Endothelial cell of umbilical vein (primary cell): ENCODE measurements at regions of chr9 and their contacts with region 1.

Region 1: DNA sequence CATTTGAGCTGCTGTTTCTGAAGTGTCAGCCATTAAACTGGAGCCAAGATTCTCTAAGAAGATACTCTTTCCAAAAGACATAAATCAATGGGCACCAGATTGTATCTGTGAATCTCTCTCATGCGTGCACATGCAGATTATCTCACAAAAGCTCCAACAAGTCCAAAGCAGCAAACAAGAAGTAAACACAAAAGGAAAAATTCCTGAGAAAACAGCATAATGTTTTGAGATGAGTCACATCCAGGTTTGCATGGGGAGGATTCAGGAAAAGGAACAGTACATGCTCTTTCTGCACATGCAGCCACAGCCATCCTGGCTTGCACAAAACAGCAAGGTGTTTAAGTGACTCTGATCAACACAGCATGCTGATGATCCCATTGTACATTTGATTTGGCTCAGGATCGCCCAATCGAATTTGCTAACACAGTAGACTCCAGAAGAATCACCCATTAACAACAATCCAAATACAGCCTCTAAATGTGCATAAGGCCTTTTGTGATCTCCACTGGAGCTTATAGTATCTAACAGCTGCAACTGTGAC is 143.1 kb downstream of the ELAVL2 start:
- DNase-seq: peak; percentile 68
- H3K4me3 ChIP-seq: peak overlapping the region in 1 of 3 experiments; percentile 16
- H3K27ac ChIP-seq: peak overlapping the region; percentile 70
- H3K4me1 ChIP-seq: peaks cover 21% of the 10 kb centered on the region
- H3K27me3 ChIP-seq: no peaks in the 10 kb centered on the region
- CTCF ChIP-seq: no peak
- POLR2A ChIP-seq: no peak

Region 2: DNA sequence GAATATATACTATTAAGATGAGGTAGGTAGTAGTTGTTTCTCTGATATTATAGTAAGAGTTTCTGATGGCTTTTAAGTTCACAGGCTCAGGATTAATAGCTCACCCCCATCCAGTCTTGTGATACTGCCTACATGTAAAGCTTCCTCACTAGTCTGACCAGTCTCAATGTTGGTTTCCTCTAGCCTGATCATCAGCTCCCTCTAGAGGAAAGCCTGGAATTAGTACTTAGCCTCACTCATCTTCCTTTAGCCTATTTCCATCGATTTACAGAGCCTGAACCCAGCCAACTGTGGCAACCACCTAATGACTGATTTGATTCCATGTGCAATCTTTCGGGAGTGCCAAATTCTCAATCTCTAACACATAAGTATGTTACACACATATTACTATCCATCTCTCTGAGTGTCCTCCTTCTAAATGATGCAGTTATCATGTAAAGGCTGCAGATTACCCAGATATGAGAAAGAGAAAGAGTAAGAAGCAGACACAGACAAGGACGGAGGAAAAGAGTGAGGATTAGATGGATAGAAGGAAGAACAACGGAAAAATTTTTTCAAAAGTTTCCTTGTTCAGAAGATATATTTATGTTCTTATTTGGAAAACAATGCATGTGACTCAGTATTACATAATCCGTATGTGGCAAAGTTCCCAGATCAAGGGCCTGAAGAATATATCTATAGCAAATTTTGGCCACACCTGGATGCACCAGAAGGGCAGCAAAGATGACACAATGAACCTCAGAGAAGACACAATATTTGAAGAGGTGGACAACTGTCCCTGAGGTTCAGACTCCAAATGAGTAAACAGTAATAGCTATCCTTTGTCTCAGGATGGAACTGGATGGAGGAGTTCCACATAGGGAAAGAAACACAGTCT is 190.6 kb before region 1 on chr9:
- CTCF ChIA-PET with region 1: no interaction called
- POLR2A ChIA-PET with region 1: no interaction called
- dilution Hi-C with region 1: no loop called
- intact Hi-C with region 1: loop called (anchors 10 kb)
- DNase-seq: peak; percentile 64
- H3K4me3 ChIP-seq: no peak overlapping the region
- H3K27ac ChIP-seq: no peak overlapping the region
- H3K4me1 ChIP-seq: no peaks in the 10 kb centered on the region
- H3K27me3 ChIP-seq: no peaks in the 10 kb centered on the region
- CTCF ChIP-seq: peak; percentile 45 to 55
- POLR2A ChIP-seq: no peak

Region 3: GRCh38 chr9:23621188-23621587 is 61.8 kb before region 1 on chr9:
- CTCF ChIA-PET with region 1: no interaction called
- POLR2A ChIA-PET with region 1: no interaction called
- dilution Hi-C with region 1: no loop called
- intact Hi-C with region 1: loop called (anchors 1 kb)
- DNase-seq: no peak
- H3K4me3 ChIP-seq: no peak overlapping the region
- H3K27ac ChIP-seq: peak overlapping the region; percentile 90
- H3K4me1 ChIP-seq: peaks cover 21% of the 10 kb centered on the region
- H3K27me3 ChIP-seq: no peaks in the 10 kb centered on the region
- CTCF ChIP-seq: no peak
- POLR2A ChIP-seq: no peak

Region 4: GRCh38 chr9:23658376-23659258 is 24.3 kb before region 1 on chr9:
- CTCF ChIA-PET with region 1: no interaction called
- POLR2A ChIA-PET with region 1: no interaction called
- dilution Hi-C with region 1: no loop called
- intact Hi-C with region 1: no loop called
- DNase-seq: no peak
- H3K4me3 ChIP-seq: no peak overlapping the region
- H3K27ac ChIP-seq: no peak overlapping the region
- H3K4me1 ChIP-seq: no peaks in the 10 kb centered on the region
- H3K27me3 ChIP-seq: no peaks in the 10 kb centered on the region
- CTCF ChIP-seq: no peak
- POLR2A ChIP-seq: no peak

Region 5: GRCh38 chr9:23826120-23826629 is 143.2 kb after region 1 on chr9 and contains the start of gene ELAVL2:
- CTCF ChIA-PET with region 1: no interaction called
- POLR2A ChIA-PET with region 1: no interaction called
- dilution Hi-C with region 1: no loop called
- intact Hi-C with region 1: loop called (anchors 10 kb)
- DNase-seq: peak; percentile 78
- H3K4me3 ChIP-seq: peak within 1 kb of the TSS; percentile 29 to 77 (median 30)
- H3K27ac ChIP-seq: no peak within 1 kb of the TSS
- H3K4me1 ChIP-seq: peaks cover 6% of the 10 kb centered on the region
- H3K27me3 ChIP-seq: peaks cover 38 to 58% of the 10 kb centered on the region in 2 experiments
- CTCF ChIP-seq: no peak
- POLR2A ChIP-seq: no peak
- total RNA-seq, gene ELAVL2: 0.18 and 0.20 TPM in 2 replicates